ENCODE measurements at regions of chr13 and their contacts with region 1.

Region 1: GRCh38 chr13:27374650-27375049 is 49.8 kb upstream of the GTF3A start:
- DNase-seq: peak; percentile 75
- CTCF ChIP-seq: peak; percentile 58

Region 2: GRCh38 chr13:27977476-27978300 is 603.0 kb after region 1 on chr13:
- in situ Hi-C with region 1: loop called (anchors 10 kb)
- DNase-seq: peak; percentile 26
- CTCF ChIP-seq: no peak

Measured in GM13976 (cell line).